ENCODE measurements at regions of chr17 and their contacts with region 1.

Region 1: DNA sequence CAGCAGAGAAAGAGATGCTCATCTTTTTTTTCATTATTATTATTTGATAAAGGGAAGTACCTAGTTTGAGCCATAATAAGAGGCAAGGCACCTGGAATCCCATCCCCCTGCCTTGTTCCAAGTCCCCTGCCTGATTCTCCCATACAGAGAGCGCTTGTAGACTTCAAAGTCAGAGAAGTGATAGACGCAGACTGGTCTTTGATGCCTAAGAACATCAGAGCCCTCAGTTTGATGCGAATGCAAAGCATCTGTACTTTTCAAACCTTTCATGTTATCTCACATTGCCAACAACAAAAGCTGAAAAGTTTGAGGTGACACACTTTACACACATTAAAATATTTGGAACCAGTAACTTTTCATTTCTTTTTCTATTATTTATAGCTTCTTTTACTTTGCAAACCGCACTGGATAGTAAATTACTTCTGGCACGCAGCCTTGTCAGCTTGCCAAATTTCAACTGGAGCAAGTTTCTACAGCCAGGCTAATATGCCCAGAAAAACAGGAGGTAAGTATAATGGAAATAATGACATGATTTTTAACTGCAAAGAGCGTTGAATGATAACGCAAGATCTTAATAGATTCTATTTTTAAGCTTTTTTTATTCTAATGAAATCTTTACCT is 5.9 kb upstream of the UTP6 start:
- DNase-seq: no peak
- H3K4me3 Mint-ChIP-seq: no peak overlapping the region
- H3K27ac Mint-ChIP-seq: no peak overlapping the region
- H3K4me1 Mint-ChIP-seq: peaks cover 7% of the 10 kb centered on the region
- H3K27me3 Mint-ChIP-seq: peaks cover 16% of the 10 kb centered on the region

Region 2: GRCh38 chr17:31549525-31550388 is 357.7 kb before region 1 on chr17:
- intact Hi-C with region 1: loop called (anchors 10 kb)
- DNase-seq: peak; percentile 97
- H3K4me3 Mint-ChIP-seq: peak overlapping the region; percentile 89
- H3K27ac Mint-ChIP-seq: peak overlapping the region; percentile 92
- H3K4me1 Mint-ChIP-seq: peaks cover 10% of the 10 kb centered on the region
- H3K27me3 Mint-ChIP-seq: peaks cover 21% of the 10 kb centered on the region

Measured in activated CD4-positive, alpha-beta T cell treated with anti-CD3 and anti-CD28 coated beads, Interleukin-2, amount 10 ng/mL, durations not matched to agents 24 days and 14 days (primary cell).